ENCODE measurements at regions of chr12 and their contacts with region 1.

Region 1: GRCh38 chr12:99393763-99394162 is 253.8 kb upstream of the GARIN6 start:
- DNase-seq: no peak
- CTCF ChIP-seq: no peak

Region 2: DNA sequence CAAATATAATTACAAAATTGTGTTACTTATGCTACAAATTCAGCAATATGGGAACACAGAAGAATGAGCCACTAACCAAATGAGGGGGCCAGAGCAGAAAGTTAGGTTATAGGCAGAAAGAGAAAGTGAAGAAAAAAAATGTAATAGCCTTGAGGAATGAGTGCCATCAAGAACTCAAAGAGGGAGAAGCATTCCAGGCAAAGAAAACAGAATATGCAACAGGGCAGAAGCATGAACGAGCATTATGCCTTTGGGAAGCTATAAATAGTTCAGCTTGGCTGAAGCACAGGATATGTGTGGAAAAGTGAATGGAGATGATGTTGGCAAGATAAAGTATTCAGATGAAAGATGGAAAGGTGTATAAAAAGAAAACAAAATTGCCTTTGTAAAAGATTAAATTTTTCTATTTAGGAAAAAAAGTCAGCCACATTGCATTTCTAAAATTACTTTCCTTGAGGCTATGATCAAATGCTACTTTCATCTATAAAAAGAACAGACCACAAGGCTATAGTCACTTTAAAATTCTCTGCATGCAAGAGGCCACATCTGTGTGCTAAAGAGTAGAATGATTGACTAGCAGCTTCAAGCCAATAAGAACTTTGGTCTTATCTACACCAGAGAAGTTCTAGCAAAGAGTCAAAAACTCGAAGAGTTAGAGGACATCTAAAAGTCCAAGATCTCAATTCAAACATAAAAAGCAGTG is 60.2 kb after region 1 on chr12:
- CTCF ChIA-PET with region 1: no interaction called
- POLR2A ChIA-PET with region 1: no interaction called
- DNase-seq: no peak
- CTCF ChIP-seq: no peak

Region 3: GRCh38 chr12:99619389-99620158 is 225.8 kb after region 1 on chr12:
- CTCF ChIA-PET with region 1: interaction called, 90 read pairs
- POLR2A ChIA-PET with region 1: no interaction called
- DNase-seq: peak; percentile 13
- CTCF ChIP-seq: peak; percentile 75